Activated CD4-positive, alpha-beta memory T cell treated with anti-CD3 and anti-CD28 coated beads, Interleukin-2, amount 10 ng/mL, durations not matched to agents 7 days and 5 days (primary cell): ENCODE measurements at regions of chr11 and their contacts with region 1.

Region 1: DNA sequence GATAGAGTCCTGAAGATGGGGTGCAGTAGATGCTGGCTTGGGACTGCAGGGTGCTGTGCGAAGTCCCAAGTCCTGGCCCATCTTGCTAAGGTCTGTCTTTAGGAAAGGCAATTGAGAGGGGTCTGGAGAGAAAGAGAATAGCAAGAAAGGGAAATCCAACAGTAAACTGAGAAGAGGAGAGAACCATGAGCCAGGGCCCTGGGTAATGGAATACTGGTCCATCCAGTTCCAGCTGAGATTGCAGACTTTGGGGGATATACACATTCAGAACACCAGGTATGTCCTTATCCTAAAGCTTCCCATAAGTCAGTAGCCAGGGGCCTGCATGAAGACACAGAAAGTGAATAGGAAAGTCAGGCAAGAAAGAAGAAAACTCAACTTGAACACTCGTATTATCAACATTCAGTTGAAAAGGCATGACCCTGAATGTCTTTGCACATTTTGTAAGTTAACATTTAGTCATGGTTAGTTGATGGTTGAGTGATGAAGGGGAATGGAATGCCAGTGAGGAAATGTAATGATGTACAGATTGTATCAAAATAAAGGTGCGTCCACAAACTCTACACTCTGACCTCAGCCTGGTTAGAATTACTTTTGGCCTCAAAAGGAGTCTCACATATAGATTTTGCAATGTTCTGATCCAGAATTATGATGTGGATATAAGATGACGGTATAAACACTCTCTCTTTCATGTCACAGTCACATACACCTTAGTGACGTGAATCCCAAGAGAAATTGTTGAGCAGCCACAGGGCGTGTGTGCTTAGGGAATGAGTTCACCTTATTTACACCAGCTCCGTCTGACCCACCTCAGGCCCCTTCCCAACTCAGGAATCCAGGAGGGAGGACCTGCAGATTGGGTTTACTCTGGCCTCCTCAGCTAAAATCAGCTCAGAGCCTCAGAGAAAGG is 100.3 kb downstream of the RDX start:
- DNase-seq: no peak
- H3K4me3 Mint-ChIP-seq: no peak overlapping the region
- H3K27ac Mint-ChIP-seq: no peak overlapping the region
- H3K4me1 Mint-ChIP-seq: peaks cover 18% of the 10 kb centered on the region
- H3K27me3 Mint-ChIP-seq: peaks cover 19% of the 10 kb centered on the region

Region 2: DNA sequence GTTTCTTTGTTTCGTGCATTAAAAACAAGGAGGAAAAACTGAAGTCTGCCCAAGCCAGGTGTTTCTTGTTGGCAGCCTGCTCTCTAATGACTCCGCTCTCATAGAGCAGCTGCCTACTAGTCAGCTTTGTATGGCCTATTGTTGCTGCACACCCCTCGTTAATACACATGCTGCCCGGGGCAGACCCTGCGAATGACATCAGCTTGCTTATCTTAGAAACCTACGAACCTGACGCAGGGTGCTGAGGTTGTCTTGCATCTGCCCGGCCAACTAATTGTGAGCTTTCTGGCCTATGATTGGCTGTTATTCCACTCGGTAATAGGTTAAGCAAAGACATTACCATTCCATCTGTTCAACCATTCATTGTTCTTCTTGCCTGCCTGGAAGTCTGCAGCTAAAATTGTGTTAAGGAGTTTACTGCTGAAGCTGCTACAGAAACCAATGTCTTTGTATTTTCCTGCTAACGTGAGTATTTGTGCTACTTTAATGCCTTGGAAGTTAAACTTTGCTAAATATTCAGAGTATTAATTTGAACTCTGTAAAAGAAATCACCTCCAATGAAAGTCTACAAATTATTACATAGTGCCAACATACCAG is 65.4 kb before region 1 on chr11:
- CTCF ChIA-PET with region 1: no interaction called
- POLR2A ChIA-PET with region 1: no interaction called
- DNase-seq: no peak
- H3K4me3 Mint-ChIP-seq: no peak overlapping the region
- H3K27ac Mint-ChIP-seq: no peak overlapping the region
- H3K4me1 Mint-ChIP-seq: no peaks in the 10 kb centered on the region
- H3K27me3 Mint-ChIP-seq: peaks cover 5% of the 10 kb centered on the region

Region 3: DNA sequence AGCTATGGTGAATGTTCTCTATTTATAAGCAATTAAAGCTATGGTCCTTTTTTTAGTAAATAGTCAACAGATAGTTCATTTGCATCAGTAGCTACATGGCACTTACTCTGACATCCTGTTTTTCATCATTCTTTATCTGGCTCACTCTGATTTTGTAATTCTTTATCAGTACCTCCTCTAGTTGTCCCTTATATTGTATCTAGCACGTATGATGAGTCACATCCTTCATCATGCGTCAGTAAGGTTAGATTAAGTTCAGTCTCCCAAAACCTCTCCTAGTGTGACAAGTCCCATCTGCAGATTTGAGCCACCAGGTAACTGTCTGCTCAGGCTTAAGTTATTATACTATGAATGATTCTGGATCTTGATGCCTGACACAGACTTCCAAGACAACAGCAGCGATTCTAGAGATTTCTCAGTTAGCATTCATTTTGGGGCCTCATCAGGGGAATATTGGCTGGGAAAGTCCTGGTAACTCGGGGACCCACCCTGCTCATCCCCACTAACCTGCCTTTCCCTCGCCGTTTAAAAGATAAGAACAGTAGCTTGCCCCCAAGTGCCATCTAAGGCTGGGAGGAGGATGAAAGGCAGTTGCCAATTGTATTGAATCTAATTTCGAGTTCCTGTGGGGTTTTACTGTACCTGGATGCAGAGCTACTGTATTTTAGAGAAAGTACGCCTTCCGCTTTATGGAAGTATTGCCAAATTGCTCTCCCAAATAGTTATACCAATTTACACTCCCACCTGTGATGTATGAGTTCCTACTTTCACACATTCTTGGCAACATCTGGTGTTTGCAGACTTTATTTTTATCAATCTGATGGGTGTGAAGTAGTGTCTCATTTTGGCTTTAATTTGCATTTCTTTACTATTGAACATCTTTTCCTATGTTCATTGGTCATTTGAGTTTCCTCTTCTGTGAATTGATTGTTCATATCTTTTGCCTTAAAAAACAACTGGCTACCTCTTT is 47.0 kb before region 1 on chr11:
- CTCF ChIA-PET with region 1: no interaction called
- POLR2A ChIA-PET with region 1: no interaction called
- DNase-seq: no peak
- H3K4me3 Mint-ChIP-seq: no peak overlapping the region
- H3K27ac Mint-ChIP-seq: no peak overlapping the region
- H3K4me1 Mint-ChIP-seq: peaks cover 10% of the 10 kb centered on the region
- H3K27me3 Mint-ChIP-seq: peaks cover 9% of the 10 kb centered on the region

Region 4: DNA sequence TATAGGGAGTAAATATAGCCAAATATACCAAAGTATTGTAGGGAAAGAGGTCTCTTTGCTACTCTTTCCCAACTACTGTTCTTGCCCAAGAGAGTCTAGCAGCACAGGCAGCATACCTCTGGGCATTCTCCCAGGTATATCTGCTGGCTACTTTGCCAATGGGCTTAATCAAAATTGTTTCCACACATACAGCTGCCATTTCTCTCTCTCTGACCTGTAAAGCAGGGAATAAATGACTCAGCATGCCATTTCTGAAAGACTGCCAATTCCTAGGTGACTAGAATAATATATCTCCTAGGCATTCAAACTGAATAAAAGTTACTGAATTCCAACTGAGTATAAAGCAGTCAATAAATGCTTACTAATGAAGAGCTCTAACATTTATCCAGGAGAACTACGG is 55.7 kb after region 1 on chr11:
- CTCF ChIA-PET with region 1: interaction called, 14 read pairs
- POLR2A ChIA-PET with region 1: no interaction called
- DNase-seq: no peak
- H3K4me3 Mint-ChIP-seq: no peak overlapping the region
- H3K27ac Mint-ChIP-seq: no peak overlapping the region
- H3K4me1 Mint-ChIP-seq: peaks cover 10% of the 10 kb centered on the region
- H3K27me3 Mint-ChIP-seq: no peaks in the 10 kb centered on the region

Region 5: GRCh38 chr11:110367571-110367970 is 171.5 kb after region 1 on chr11:
- CTCF ChIA-PET with region 1: interaction called, 68 read pairs
- POLR2A ChIA-PET with region 1: no interaction called
- DNase-seq: no peak
- H3K4me3 Mint-ChIP-seq: no peak overlapping the region
- H3K27ac Mint-ChIP-seq: no peak overlapping the region
- H3K4me1 Mint-ChIP-seq: peaks cover 14% of the 10 kb centered on the region
- H3K27me3 Mint-ChIP-seq: no peaks in the 10 kb centered on the region

Region 6: DNA sequence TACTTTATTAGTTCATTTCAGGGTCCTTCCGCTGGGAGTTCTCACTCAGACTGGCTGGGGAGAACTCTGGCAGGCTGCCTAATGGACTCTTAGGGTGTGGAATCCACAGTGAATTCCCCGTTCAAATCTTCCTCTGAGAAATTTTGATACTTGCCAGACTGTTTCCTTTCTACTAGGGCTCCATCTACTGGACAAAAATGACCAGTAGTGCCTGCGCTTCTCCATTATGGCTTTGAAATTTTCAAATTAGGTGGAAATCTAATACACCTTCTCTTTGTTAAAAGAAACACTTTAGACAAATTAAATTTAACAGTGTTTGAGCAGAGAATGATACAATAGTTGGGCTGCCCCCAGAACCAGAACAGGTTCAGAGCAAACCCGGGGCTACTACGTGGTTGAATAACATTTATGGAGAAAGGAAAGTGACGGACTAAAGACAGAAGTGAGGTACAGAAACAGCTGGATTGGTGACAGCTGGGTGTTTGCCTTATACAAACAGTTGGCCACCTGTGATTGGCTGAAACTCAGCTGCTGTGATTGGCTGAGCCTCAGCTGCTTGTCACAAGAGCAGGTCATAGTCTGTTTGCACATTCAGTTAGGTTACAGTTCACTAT is 180.7 kb after region 1 on chr11:
- CTCF ChIA-PET with region 1: interaction called, 68 read pairs
- POLR2A ChIA-PET with region 1: no interaction called
- DNase-seq: no peak
- H3K4me3 Mint-ChIP-seq: no peak overlapping the region
- H3K27ac Mint-ChIP-seq: no peak overlapping the region
- H3K4me1 Mint-ChIP-seq: peaks cover 19% of the 10 kb centered on the region
- H3K27me3 Mint-ChIP-seq: no peaks in the 10 kb centered on the region